ENCODE measurements at regions of chr17 and their contacts with region 1.

Region 1: GRCh38 chr17:59804901-59805465 is 87.8 kb downstream of the TUBD1 start:
- DNase-seq: no peak
- ATAC-seq: peak in 1 of 4 donors; percentile 41
- H3K4me3 ChIP-seq: peak overlapping the region in 9 of 12 donors; percentile 13 to 38 (median 31)
- H3K27ac ChIP-seq: peak overlapping the region in 10 of 12 donors; percentile 25 to 89 (median 43)
- H3K4me1 ChIP-seq: peaks cover 0 to 52% (median 0%) of the 10 kb centered on the region in 12 donors
- H3K27me3 ChIP-seq: no peaks in the 10 kb centered on the region
- CTCF ChIP-seq: no peak
- POLR2A ChIP-seq: no peak

Region 2: DNA sequence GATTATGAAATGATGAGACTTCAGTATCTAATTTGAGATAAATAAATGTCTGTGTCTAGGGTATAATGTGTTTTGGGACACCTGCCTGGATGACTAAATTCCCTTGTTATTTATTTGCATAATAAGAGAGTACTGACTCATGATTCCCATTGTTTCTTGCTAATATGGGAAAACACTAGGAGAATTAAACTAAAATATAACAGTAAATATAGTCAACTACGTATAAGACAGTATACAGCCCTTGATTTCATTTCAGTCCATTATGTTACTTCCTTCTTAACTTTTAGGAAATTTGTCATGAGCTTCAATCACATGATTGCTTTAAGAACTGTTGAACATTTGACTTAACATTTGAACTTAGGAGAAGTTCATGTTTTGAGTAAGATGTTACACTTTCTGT is 35.1 kb before region 1 on chr17:
- intact Hi-C with region 1: loop called in 1 of 10 experiments (anchors 5 kb)
- DNase-seq: no peak
- ATAC-seq: peak in 2 of 4 donors; percentile 14 to 18
- H3K4me3 ChIP-seq: no peak overlapping the region
- H3K27ac ChIP-seq: peak overlapping the region in 1 of 12 donors; percentile 81
- H3K4me1 ChIP-seq: peaks cover 0 to 47% (median 0%) of the 10 kb centered on the region in 12 donors
- H3K27me3 ChIP-seq: no peaks in the 10 kb centered on the region
- CTCF ChIP-seq: no peak
- POLR2A ChIP-seq: no peak

Region 3: GRCh38 chr17:59876107-59876506 is 71.1 kb after region 1 on chr17:
- intact Hi-C with region 1: no loop called
- DNase-seq: no peak
- ATAC-seq: no peak
- H3K4me3 ChIP-seq: no peak overlapping the region
- H3K27ac ChIP-seq: no peak overlapping the region
- H3K4me1 ChIP-seq: no peaks in the 10 kb centered on the region
- H3K27me3 ChIP-seq: no peaks in the 10 kb centered on the region
- CTCF ChIP-seq: no peak
- POLR2A ChIP-seq: no peak

Region 4: GRCh38 chr17:60036796-60037612 is 232.0 kb after region 1 on chr17:
- intact Hi-C with region 1: no loop called
- DNase-seq: peak; percentile 24 to 80 (median 66)
- ATAC-seq: peak; percentile 66 to 93 (median 86)
- H3K4me3 ChIP-seq: peak overlapping the region in 1 of 12 donors; percentile 2
- H3K27ac ChIP-seq: no peak overlapping the region
- H3K4me1 ChIP-seq: peaks cover 0 to 6% (median 0%) of the 10 kb centered on the region in 12 donors
- H3K27me3 ChIP-seq: peaks cover 0 to 19% (median 4%) of the 10 kb centered on the region in 9 donors
- CTCF ChIP-seq: peak; percentile 74 to 93 (median 88)
- POLR2A ChIP-seq: no peak